Activated T-helper 1 cell treated with anti-CD3 and anti-CD28 coated beads, Interleukin-12 subunit alpha, Interleukin-12 subunit beta, Interleukin-2, Interleukin-4 antibody, amounts not matched to agents 30 ng/mL and 10 ng/mL and 1 ng/mL, durations not matched to agents 14 hours and 24 hours and 36 hours (primary cell): ENCODE measurements at regions of chr19 and their contacts with region 1.

Region 1: DNA sequence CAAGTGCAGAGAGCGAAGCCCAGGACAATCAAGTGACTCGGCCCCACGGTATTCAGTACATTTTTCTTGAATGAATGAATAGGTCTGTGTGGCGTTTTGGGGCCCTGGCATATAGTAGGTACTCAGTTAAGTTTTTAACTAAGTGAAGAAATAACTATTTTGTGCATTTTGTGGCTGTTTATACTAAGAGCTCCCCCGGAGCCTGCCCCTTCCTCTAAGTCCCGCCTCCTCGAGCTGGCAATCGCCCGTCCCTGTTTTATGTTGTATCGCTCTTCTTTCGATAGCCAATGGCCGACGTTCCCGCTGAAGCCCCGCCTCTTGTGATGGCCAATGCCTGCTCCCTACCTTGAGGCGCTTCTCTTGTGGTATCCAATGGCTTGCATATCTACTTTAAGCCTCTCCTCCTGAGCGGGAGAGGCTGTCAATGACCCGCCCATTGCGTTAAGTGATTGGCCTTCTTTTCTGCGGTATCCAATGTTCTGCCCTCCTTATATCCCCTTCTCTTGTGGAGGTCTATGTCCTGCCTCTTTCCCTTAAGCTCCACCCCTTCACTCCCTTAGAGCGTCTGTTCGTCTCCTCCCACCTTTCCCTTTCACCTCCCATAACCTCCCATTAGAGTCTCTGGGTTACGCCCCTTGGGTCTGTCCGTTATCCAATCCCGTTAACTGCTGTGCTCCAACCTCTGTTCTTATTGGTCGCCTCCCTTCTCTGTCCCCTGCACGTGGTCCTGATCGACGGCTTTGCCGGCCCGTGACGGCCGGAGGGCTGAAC is 509 bp upstream of the HDGFL2 start:
- DNase-seq: peak; percentile 97
- H3K4me3 Mint-ChIP-seq: no peak overlapping the region
- H3K27ac Mint-ChIP-seq: no peak overlapping the region
- H3K4me1 Mint-ChIP-seq: peaks cover 18% of the 10 kb centered on the region
- H3K27me3 Mint-ChIP-seq: no peaks in the 10 kb centered on the region

Region 2: GRCh38 chr19:4065430-4066175 is 406.0 kb before region 1 on chr19:
- intact Hi-C with region 1: loop called (anchors 5 kb)
- DNase-seq: peak; percentile 97
- H3K4me3 Mint-ChIP-seq: peak overlapping the region; percentile 64
- H3K27ac Mint-ChIP-seq: no peak overlapping the region
- H3K4me1 Mint-ChIP-seq: peaks cover 16% of the 10 kb centered on the region
- H3K27me3 Mint-ChIP-seq: no peaks in the 10 kb centered on the region

Region 3: GRCh38 chr19:4182084-4182810 is 289.3 kb before region 1 on chr19 and contains the starts of genes ANKRD24 and SIRT6:
- intact Hi-C with region 1: loop called (anchors 5 kb)
- DNase-seq: peak; percentile 96
- H3K4me3 Mint-ChIP-seq: peak within 1 kb of the TSS; percentile 98
- H3K27ac Mint-ChIP-seq: peak within 1 kb of the TSS; percentile 94
- H3K4me1 Mint-ChIP-seq: peaks cover 45% of the 10 kb centered on the region
- H3K27me3 Mint-ChIP-seq: peaks cover 8% of the 10 kb centered on the region
- total RNA-seq, gene ANKRD24: 0.49 and 0.54 TPM in 2 replicates
- total RNA-seq, gene SIRT6: 42.6 and 46.4 TPM in 2 replicates

Region 4: GRCh38 chr19:4267101-4267900 is 204.3 kb before region 1 on chr19:
- intact Hi-C with region 1: no loop called
- DNase-seq: peak; percentile 40
- H3K4me3 Mint-ChIP-seq: no peak overlapping the region
- H3K27ac Mint-ChIP-seq: peak overlapping the region; percentile 9
- H3K4me1 Mint-ChIP-seq: peaks cover 17% of the 10 kb centered on the region
- H3K27me3 Mint-ChIP-seq: no peaks in the 10 kb centered on the region

Region 5: GRCh38 chr19:4342615-4343369 is 128.8 kb before region 1 on chr19:
- intact Hi-C with region 1: loop called (anchors 2 kb)
- DNase-seq: peak; percentile 92
- H3K4me3 Mint-ChIP-seq: peak overlapping the region; percentile 91
- H3K27ac Mint-ChIP-seq: peak overlapping the region; percentile 90
- H3K4me1 Mint-ChIP-seq: peaks cover 18% of the 10 kb centered on the region
- H3K27me3 Mint-ChIP-seq: no peaks in the 10 kb centered on the region

Region 6: DNA sequence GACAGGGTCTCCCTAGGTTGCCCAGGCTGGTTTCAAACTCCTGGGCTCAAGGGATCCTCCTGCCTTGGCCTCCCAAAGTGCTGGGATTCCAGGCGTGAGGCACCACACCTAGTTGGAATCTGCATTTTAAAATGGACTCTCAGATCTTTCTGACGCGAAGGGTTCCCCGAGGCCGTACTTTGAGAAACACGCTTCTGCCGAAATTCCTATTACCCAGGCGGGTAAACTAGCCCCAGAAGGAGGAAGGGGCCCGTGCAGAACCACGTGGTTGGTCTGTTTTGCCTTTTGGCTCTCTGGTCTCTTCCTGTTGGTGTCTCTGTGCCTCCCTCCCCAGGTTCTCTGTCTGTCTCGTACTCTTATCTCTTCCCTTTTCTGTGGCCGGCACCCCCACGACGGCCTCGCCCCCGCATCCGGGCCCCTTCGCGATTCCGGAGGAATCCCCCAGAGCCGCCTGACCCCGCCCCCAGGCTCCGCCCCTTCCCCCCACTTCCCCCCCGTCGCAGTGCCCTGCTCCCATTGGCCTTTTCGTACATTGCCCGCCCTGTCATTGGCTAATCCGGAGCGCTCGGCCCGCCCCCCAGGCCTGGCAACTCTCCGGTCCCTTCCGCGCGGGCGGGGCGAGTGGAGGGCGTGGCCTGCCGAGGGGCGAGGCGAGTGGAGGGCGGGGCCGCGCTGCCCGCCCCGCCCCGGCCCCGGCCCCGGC is 167.4 kb after region 1 on chr19 and contains the start of gene TNFAIP8L1:
- intact Hi-C with region 1: loop called (anchors 2 kb)
- DNase-seq: peak; percentile 99
- H3K4me3 Mint-ChIP-seq: peak within 1 kb of the TSS; percentile 98
- H3K27ac Mint-ChIP-seq: peak within 1 kb of the TSS; percentile 94
- H3K4me1 Mint-ChIP-seq: peaks cover 32% of the 10 kb centered on the region
- H3K27me3 Mint-ChIP-seq: no peaks in the 10 kb centered on the region
- total RNA-seq, gene TNFAIP8L1: 13.2 and 13.7 TPM in 2 replicates

Region 7: DNA sequence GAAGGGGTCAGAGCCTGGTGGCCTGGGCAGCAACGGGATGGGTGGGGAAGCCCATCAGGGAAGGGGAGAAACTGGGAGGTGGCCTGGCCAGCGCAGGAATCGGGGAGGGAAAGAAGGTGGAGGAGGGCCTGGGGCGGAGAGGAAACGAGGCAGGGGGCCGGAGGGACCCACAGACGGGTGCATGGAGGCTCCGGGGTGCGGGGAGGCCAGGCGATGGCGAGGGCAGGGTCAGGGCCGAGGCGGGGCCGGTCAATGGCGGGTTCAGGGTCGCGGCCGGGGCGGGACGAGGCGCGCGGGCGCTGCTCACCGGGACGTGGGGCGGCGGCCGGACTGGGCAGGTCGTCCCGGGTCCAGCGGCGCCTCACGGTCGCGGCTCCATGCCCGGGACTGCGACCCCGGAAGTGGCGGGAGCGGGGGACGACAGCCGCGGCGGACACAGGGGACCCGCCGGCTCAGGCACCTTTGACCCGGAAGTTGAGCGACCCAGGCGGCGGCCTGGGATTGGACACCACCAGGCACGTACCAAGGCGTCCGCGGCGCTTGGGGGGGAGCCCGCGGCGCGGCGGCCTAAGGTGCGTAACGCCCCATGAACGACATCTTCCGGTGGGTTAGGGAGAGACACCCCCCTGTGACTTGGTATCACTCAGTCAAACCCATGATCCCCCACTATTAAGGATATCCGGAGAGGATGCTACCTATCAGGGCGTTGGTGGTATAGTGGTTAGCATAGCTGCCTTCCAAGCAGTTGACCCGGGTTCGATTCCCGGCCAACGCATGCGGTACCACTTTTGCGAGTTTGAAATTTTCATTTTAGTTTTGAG is 252.0 kb after region 1 on chr19 and contains the start of gene DPP9:
- intact Hi-C with region 1: loop called (anchors 2 kb)
- DNase-seq: peak; percentile 97
- H3K4me3 Mint-ChIP-seq: peak within 1 kb of the TSS; percentile 98
- H3K27ac Mint-ChIP-seq: peak within 1 kb of the TSS; percentile 91
- H3K4me1 Mint-ChIP-seq: peaks cover 25% of the 10 kb centered on the region
- H3K27me3 Mint-ChIP-seq: peaks cover 5% of the 10 kb centered on the region
- total RNA-seq, gene DPP9: 93.6 and 95.8 TPM in 2 replicates